ENCODE measurements at regions of chr15 and their contacts with region 1.

Region 1: GRCh38 chr15:87498560-87498959 is 758.0 kb downstream of the NTRK3 start:
- DNase-seq: no peak
- ATAC-seq: no peak

Region 2: DNA sequence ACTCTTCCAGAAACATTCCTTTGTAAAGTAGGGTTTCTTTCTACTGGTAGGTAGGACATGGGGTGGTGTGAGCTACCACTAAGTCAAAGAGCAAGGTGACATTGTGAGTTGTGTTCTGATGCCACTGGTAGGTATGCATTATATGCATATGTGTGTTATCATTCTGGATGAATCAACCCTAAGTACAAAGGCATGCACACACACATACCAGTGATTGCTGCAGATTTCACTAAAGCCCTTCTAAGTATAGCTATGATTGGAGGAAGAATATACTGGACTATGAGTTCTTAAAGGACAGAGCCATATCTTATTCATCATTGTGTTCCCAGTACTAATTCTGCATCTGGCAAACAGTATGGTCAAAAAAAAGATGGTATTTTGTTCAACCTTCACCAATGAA is 772.9 kb before region 1 on chr15:
- intact Hi-C with region 1: no loop called
- DNase-seq: no peak
- ATAC-seq: no peak

Region 3: GRCh38 chr15:87597346-87598052 is 98.9 kb after region 1 on chr15:
- intact Hi-C with region 1: loop called (anchors 10 kb)
- DNase-seq: no peak
- ATAC-seq: peak; percentile 46

Region 4: DNA sequence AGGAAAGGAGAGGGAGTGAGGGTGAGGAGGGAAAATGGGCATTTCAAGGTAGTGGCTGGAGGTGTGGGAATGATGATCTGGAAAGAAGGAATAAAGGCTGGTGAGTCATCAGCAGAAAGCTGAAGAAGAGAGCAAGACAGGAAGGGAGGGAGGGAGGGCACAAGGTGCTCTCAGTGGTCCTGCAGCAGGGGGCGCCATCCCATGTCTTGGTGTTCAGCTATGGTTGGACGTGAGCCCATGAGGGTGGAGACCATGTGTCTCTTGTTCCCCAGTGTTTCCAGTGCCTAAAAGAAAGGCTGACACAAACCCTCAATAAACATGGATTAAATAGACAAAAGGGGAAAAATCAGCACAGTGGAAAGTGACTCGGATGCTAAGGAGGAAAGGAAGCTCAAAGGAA is 529.5 kb after region 1 on chr15:
- intact Hi-C with region 1: no loop called
- DNase-seq: no peak
- ATAC-seq: no peak

Measured in Right ventricle myocardium inferior (tissue), 1 donor.